Activated B cell treated with CpG ODN at 0.5 μM for 24 hours (primary cell): ENCODE measurements at regions of chr3 and their contacts with region 1.

Region 1: DNA sequence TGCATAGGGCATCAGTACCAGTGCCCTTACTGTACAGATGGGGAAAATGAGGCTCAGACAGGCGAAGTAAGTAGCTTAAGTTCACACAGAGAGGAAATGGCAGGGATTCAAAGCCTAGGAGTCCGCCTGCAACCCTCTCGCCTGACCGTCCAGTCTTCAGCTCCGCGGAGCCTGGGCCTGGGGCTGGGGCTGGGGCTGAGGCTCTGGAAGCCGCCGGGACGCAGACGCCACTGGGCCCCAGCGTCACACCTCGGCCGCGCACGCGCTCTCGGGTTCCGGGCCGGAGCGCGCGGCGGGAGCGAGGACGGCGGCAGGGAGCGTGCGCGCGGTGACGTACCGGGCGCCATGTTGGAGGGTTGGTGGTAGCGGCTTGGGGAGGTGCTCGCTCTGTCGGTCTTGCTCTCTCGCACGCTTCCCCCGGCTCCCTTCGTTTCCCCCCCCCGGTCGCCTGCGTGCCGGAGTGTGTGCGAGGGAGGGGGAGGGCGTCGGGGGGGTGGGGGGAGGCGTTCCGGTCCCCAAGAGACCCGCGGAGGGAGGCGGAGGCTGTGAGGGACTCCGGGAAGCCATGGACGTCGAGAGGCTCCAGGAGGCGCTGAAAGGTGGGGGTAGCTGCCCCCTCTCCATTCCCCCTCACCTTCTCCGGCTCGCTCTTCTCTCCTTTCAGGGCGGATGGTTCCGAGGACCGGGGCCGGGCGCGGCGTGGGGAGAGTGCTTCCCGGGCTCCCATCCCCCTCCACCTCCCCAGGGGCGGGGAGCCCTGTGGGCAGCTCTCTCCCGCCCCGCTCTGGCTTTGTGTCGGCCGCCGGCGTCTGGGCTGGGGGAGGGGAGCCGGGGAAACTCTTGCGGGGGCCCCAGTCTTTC is at the start of gene PPP4R2:
- DNase-seq: peak; percentile 96
- ATAC-seq: peak; percentile 90
- H3K4me3 Mint-ChIP-seq: peak within 1 kb of the TSS; percentile 89
- H3K27ac Mint-ChIP-seq: peak within 1 kb of the TSS; percentile 83
- H3K4me1 Mint-ChIP-seq: peaks cover 36% of the 10 kb centered on the region
- H3K27me3 Mint-ChIP-seq: no peaks in the 10 kb centered on the region
- CTCF ChIP-seq: no peak
- total RNA-seq, gene PPP4R2: 54.7 and 59.7 TPM in 2 replicates

Region 2: GRCh38 chr3:71725279-71725991 is 1271.3 kb before region 1 on chr3 and contains the start of gene EIF4E3:
- CTCF ChIA-PET with region 1: no interaction called
- POLR2A ChIA-PET with region 1: no interaction called
- intact Hi-C with region 1: loop called (anchors 2 kb)
- DNase-seq: peak; percentile 53
- ATAC-seq: peak; percentile 72
- H3K4me3 Mint-ChIP-seq: peak within 1 kb of the TSS; percentile 86
- H3K27ac Mint-ChIP-seq: peak within 1 kb of the TSS; percentile 41
- H3K4me1 Mint-ChIP-seq: peaks cover 37% of the 10 kb centered on the region
- H3K27me3 Mint-ChIP-seq: peaks cover 17% of the 10 kb centered on the region
- CTCF ChIP-seq: no peak
- total RNA-seq, gene EIF4E3: 1.8 and 2.0 TPM in 2 replicates

Region 3: GRCh38 chr3:72756900-72757299 is 239.8 kb before region 1 on chr3:
- CTCF ChIA-PET with region 1: no interaction called
- POLR2A ChIA-PET with region 1: no interaction called
- intact Hi-C with region 1: loop called (anchors 5 kb)
- DNase-seq: no peak
- ATAC-seq: peak; percentile 99
- H3K4me3 Mint-ChIP-seq: peak overlapping the region; percentile 67
- H3K27ac Mint-ChIP-seq: no peak overlapping the region
- H3K4me1 Mint-ChIP-seq: peaks cover 32% of the 10 kb centered on the region
- H3K27me3 Mint-ChIP-seq: peaks cover 33% of the 10 kb centered on the region
- CTCF ChIP-seq: no peak

Region 4: DNA sequence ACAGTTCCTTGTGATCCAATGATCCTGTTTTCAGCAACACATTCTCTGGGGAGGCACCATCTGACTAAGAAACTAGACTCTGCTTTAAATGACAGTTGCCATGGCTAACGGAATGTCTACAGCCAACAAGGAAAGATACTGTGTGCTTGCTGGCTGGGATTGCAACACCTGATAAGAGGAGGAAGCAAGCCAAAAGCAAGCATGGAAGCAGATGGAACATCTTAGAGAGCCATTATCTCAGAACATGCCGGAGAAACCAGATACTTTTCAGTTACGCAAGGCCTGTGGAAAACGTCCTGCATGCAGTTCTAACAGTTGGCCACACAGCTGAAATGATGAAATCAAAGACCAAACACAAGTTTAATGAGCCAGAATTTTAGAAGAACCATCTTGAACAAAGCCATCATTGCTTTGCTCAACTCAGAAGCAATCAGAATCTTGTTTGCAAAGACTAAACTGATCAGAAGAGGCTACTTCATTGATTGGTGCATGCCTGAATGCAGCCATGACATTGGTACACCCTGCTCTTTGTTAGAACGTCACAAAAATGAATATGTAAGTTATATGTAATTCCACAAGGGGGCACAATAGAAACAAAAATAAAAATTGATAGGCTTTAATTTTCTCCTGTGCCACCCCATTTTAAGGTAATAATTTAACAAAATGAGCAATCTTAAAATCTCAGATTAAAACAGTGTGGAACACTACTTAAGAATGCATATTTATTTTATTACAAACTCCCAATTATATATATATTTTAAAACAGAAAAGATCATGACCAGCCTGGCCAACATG is 58.0 kb before region 1 on chr3:
- CTCF ChIA-PET with region 1: no interaction called
- POLR2A ChIA-PET with region 1: no interaction called
- intact Hi-C with region 1: loop called (anchors 2 kb)
- DNase-seq: no peak
- ATAC-seq: peak; percentile 81
- H3K4me3 Mint-ChIP-seq: no peak overlapping the region
- H3K27ac Mint-ChIP-seq: no peak overlapping the region
- H3K4me1 Mint-ChIP-seq: no peaks in the 10 kb centered on the region
- H3K27me3 Mint-ChIP-seq: peaks cover 4% of the 10 kb centered on the region
- CTCF ChIP-seq: no peak

Region 5: GRCh38 chr3:73007992-73008712 is 11.4 kb after region 1 on chr3:
- CTCF ChIA-PET with region 1: no interaction called
- POLR2A ChIA-PET with region 1: no interaction called
- intact Hi-C with region 1: no loop called
- DNase-seq: no peak
- ATAC-seq: no peak
- H3K4me3 Mint-ChIP-seq: no peak overlapping the region
- H3K27ac Mint-ChIP-seq: no peak overlapping the region
- H3K4me1 Mint-ChIP-seq: peaks cover 47% of the 10 kb centered on the region
- H3K27me3 Mint-ChIP-seq: no peaks in the 10 kb centered on the region
- CTCF ChIP-seq: no peak

Region 6: DNA sequence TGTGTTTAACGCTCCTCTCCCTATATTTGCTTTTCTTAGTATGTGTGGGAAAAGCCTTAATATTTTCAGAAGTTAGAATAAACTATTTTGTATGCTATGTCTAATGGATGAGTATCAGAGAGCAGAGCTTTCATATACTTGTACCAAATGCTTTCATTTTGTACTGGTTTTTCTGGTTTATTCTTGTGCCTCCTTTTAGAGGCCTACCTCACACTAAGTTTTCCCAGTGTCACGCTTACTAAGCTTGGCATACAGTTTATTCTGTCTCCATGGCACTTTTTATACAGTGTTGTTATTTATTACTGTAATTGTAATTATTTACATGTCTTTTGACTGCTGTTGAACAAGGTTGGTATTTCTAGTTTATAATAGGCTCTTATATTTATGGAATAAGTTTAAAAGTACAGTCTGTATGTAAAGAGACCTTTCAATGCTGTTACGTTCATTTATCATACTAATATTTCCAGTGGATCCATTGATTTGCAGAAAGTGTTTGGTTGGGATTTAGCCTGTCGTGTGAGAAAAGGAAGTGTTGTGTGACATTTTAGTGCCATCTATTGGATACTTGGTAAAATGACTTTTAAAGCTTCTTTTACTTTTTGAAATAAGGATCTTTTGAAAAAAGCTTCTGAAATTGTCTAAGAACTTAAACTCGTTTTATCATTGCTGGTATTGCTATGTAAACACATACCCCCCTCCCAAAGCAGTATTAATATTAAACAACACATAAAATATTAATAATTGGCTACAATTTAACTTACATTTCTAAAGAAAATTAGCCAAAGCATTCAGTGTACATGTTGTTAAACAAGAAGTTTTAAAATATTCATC is 59.5 kb after region 1 on chr3:
- CTCF ChIA-PET with region 1: interaction called, 5 read pairs
- POLR2A ChIA-PET with region 1: interaction called, 3 read pairs
- intact Hi-C with region 1: loop called (anchors 2 kb)
- DNase-seq: no peak
- ATAC-seq: no peak
- H3K4me3 Mint-ChIP-seq: no peak overlapping the region
- H3K27ac Mint-ChIP-seq: no peak overlapping the region
- H3K4me1 Mint-ChIP-seq: peaks cover 3% of the 10 kb centered on the region
- H3K27me3 Mint-ChIP-seq: no peaks in the 10 kb centered on the region
- CTCF ChIP-seq: no peak